CD4-positive, alpha-beta memory T cell (primary cell): ENCODE measurements at regions of chr19 and their contacts with region 1.

Region 1: GRCh38 chr19:14136509-14137281 is at the start of gene ASF1B:
- DNase-seq: peak; percentile 98 to 99 (median 99)
- H3K4me3 ChIP-seq: peak within 1 kb of the TSS; percentile 73 to 77
- H3K4me3 Mint-ChIP-seq: peak within 1 kb of the TSS; percentile 92 to 100 (median 95)
- H3K27ac ChIP-seq: peak within 1 kb of the TSS; percentile 93
- H3K27ac Mint-ChIP-seq: peak within 1 kb of the TSS; percentile 85 to 98 (median 96)
- H3K4me1 ChIP-seq: peaks cover 18% of the 10 kb centered on the region
- H3K4me1 Mint-ChIP-seq: peaks cover 13 to 33% (median 21%) of the 10 kb centered on the region in 4 donors
- H3K27me3 ChIP-seq: no peaks in the 10 kb centered on the region
- H3K27me3 Mint-ChIP-seq: no peaks in the 10 kb centered on the region
- total RNA-seq, gene ASF1B: 2.3 to 3.0 TPM

Region 2: DNA sequence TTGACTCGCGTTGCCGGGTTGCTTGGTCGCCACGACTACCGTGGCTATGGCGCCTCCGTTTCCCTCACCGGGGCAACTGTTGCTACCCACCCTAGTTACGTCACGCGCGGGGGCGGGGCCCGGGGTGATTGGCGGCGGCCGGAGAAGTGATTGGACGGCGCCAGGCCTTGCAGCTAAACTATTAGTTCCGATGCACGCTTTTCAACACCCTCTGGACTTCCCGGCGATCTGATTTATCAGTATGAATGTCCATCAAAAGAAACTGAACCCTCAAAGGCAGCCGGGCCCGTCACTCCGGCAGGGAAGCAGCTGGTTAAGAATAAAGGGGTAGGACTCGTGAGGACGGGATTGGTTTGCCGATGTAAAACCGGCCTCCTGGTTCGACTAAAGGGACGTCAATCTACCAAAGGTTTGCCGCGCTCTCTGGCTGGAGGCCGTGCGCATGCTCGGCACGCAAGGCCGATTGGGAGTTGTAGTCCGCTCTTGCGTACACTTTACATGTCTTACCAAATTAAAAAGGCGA is 130.4 kb before region 1 on chr19 and contains the start of gene RFX1:
- CTCF ChIA-PET with region 1: interaction called, 3 read pairs
- POLR2A ChIA-PET with region 1: interaction called, 10 read pairs
- intact Hi-C with region 1: no loop called
- DNase-seq: peak; percentile 100
- H3K4me3 ChIP-seq: peak within 1 kb of the TSS; percentile 58 to 82
- H3K4me3 Mint-ChIP-seq: peak within 1 kb of the TSS; percentile 91 to 98 (median 96)
- H3K27ac ChIP-seq: peak within 1 kb of the TSS; percentile 99
- H3K27ac Mint-ChIP-seq: peak within 1 kb of the TSS; percentile 97 to 100 (median 100)
- H3K4me1 ChIP-seq: peaks cover 47% of the 10 kb centered on the region
- H3K4me1 Mint-ChIP-seq: peaks cover 29 to 51% (median 39%) of the 10 kb centered on the region in 4 donors
- H3K27me3 ChIP-seq: no peaks in the 10 kb centered on the region
- H3K27me3 Mint-ChIP-seq: peaks cover 0 to 2% of the 10 kb centered on the region in 2 donors
- total RNA-seq, gene RFX1: 17.4 to 17.8 TPM

Region 3: GRCh38 chr19:14091081-14091812 is 45.4 kb before region 1 on chr19:
- CTCF ChIA-PET with region 1: interaction called, 6 read pairs
- POLR2A ChIA-PET with region 1: interaction called, 24 read pairs
- intact Hi-C with region 1: loop called (anchors 1 kb)
- DNase-seq: peak; percentile 79 to 84 (median 80)
- H3K4me3 ChIP-seq: peak overlapping the region; percentile 86 to 88
- H3K4me3 Mint-ChIP-seq: peak overlapping the region; percentile 99 to 100 (median 100)
- H3K27ac ChIP-seq: peak overlapping the region; percentile 72
- H3K27ac Mint-ChIP-seq: peak overlapping the region; percentile 95 to 100 (median 99)
- H3K4me1 ChIP-seq: peaks cover 14% of the 10 kb centered on the region
- H3K4me1 Mint-ChIP-seq: peaks cover 10 to 28% (median 21%) of the 10 kb centered on the region in 4 donors
- H3K27me3 ChIP-seq: no peaks in the 10 kb centered on the region
- H3K27me3 Mint-ChIP-seq: peaks cover 0 to 2% of the 10 kb centered on the region in 2 donors

Region 4: GRCh38 chr19:14167576-14168138 is 31.0 kb after region 1 on chr19:
- CTCF ChIA-PET with region 1: interaction called, 17 read pairs
- POLR2A ChIA-PET with region 1: interaction called, 32 read pairs
- intact Hi-C with region 1: loop called (anchors 2 kb)
- DNase-seq: peak; percentile 26 to 42 (median 32)
- H3K4me3 ChIP-seq: peak overlapping the region in 1 of 2 donors; percentile 44
- H3K4me3 Mint-ChIP-seq: peak overlapping the region; percentile 81 to 92 (median 88)
- H3K27ac ChIP-seq: peak overlapping the region; percentile 61
- H3K27ac Mint-ChIP-seq: peak overlapping the region; percentile 87 to 97 (median 93)
- H3K4me1 ChIP-seq: peaks cover 26% of the 10 kb centered on the region
- H3K4me1 Mint-ChIP-seq: peaks cover 17 to 30% (median 23%) of the 10 kb centered on the region in 4 donors
- H3K27me3 ChIP-seq: no peaks in the 10 kb centered on the region
- H3K27me3 Mint-ChIP-seq: no peaks in the 10 kb centered on the region

Region 5: DNA sequence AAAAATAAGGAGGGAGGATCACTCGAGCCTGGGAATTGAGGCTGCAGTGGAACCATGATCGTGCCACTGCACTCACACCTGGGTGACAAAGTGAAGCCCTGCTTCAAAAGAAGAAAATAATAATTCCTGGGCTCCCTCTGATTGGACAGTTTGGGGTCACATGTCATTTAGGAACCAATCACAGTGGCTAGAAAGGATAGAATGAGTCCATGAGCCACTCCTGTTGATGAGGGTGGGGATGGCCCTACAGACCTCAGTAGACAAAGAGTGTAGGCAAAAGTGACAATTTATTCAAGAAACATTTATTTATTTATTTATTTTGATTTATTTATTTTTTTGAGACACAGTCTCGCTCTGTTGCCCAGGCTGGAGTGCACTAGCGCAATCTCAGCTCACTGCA is 217.8 kb after region 1 on chr19:
- CTCF ChIA-PET with region 1: interaction called, 68 read pairs
- POLR2A ChIA-PET with region 1: interaction called, 36 read pairs
- intact Hi-C with region 1: no loop called
- DNase-seq: no peak
- H3K4me3 ChIP-seq: no peak overlapping the region
- H3K4me3 Mint-ChIP-seq: peak overlapping the region in 1 of 8 donors; percentile 15
- H3K27ac ChIP-seq: peak overlapping the region; percentile 61
- H3K27ac Mint-ChIP-seq: peak overlapping the region in 5 of 7 donors; percentile 35 to 99 (median 93)
- H3K4me1 ChIP-seq: peaks cover 55% of the 10 kb centered on the region
- H3K4me1 Mint-ChIP-seq: peaks cover 22 to 39% (median 29%) of the 10 kb centered on the region in 4 donors
- H3K27me3 ChIP-seq: no peaks in the 10 kb centered on the region
- H3K27me3 Mint-ChIP-seq: no peaks in the 10 kb centered on the region

Region 6: GRCh38 chr19:14479975-14480699 is 343.4 kb after region 1 on chr19:
- CTCF ChIA-PET with region 1: interaction called, 34 read pairs
- POLR2A ChIA-PET with region 1: interaction called, 5 read pairs
- intact Hi-C with region 1: loop called (anchors 2 kb)
- DNase-seq: peak; percentile 56 to 75 (median 64)
- H3K4me3 ChIP-seq: no peak overlapping the region
- H3K4me3 Mint-ChIP-seq: no peak overlapping the region
- H3K27ac ChIP-seq: no peak overlapping the region
- H3K27ac Mint-ChIP-seq: no peak overlapping the region
- H3K4me1 ChIP-seq: peaks cover 18% of the 10 kb centered on the region
- H3K4me1 Mint-ChIP-seq: peaks cover 7 to 15% (median 11%) of the 10 kb centered on the region in 4 donors
- H3K27me3 ChIP-seq: no peaks in the 10 kb centered on the region
- H3K27me3 Mint-ChIP-seq: peaks cover 0 to 7% of the 10 kb centered on the region in 2 donors